Activated CD4-positive, alpha-beta memory T cell treated with anti-CD3 and anti-CD28 coated beads for 36 hours (primary cell): ENCODE measurements at regions of chr5 and their contacts with region 1.

Region 1: GRCh38 chr5:170225326-170226128 is 7.3 kb upstream of the C5orf58 start:
- DNase-seq: peak; percentile 81
- H3K4me3 Mint-ChIP-seq: no peak overlapping the region
- H3K27ac Mint-ChIP-seq: no peak overlapping the region
- H3K4me1 Mint-ChIP-seq: peaks cover 3% of the 10 kb centered on the region
- H3K27me3 Mint-ChIP-seq: no peaks in the 10 kb centered on the region

Region 2: DNA sequence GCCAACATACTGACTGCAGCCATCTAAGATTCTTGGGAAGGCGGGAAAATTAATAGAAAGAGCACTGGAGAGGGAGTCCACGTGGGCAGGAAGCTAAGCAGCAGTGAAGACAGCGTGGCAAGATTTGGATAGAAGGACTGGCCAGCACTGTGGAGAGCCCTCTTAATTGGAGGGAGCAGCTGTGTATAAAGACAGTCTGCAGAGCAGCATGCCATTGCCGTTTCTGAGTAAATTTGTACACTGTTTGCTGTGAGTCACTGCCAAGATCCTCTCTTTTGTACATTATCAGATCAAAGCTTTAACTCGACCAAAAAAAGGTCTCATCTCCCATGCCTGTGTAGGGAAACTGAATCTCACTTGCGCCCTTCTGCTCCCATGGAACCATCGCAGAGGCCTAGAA is 290.5 kb before region 1 on chr5:
- CTCF ChIA-PET with region 1: no interaction called
- POLR2A ChIA-PET with region 1: no interaction called
- intact Hi-C with region 1: no loop called
- DNase-seq: no peak
- H3K4me3 Mint-ChIP-seq: no peak overlapping the region
- H3K27ac Mint-ChIP-seq: no peak overlapping the region
- H3K4me1 Mint-ChIP-seq: peaks cover 42% of the 10 kb centered on the region
- H3K27me3 Mint-ChIP-seq: no peaks in the 10 kb centered on the region

Region 3: DNA sequence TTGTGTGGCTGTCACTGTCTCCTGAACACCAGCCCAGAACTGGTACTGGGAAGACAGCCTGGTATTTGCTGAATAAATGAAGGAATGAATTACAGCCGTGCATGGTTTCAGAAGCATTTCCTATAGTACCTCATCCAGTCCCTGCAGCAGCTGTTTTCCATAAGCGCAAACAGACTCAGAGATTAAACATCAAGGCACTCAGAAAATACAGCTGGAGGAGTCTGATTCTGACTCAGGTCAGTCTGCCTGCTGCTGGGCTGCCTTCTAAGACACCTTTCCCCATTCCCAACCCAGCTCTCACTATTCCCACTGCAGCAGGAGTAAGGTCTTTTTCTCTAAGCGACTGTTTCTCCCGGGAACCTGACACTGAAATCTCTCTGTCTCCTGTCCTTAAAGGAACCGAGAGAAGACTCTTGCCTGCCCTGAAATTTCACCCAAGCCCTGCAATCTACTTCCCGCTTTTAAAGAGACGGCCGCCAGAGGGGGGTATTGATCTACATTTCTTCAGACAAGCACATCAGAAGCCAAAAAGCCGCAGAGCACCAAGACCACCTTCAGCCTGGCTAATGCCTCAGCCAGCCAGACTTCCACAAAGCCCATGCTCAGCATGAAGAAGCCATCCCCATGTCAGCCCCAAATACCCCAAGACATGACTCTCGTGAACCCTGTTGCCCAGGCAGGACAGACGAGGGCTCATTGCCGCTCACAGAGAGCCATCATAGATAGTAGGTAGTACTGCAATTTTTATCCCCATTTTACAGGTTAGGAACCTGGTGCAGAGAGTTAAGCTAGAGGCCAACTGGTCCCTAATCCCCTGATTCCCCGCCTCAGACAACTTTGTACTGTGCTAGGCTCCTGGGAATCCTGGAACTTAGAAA is 125.2 kb before region 1 on chr5:
- CTCF ChIA-PET with region 1: interaction called, 3 read pairs
- POLR2A ChIA-PET with region 1: no interaction called
- intact Hi-C with region 1: loop called (anchors 5 kb)
- DNase-seq: peak; percentile 78
- H3K4me3 Mint-ChIP-seq: no peak overlapping the region
- H3K27ac Mint-ChIP-seq: no peak overlapping the region
- H3K4me1 Mint-ChIP-seq: no peaks in the 10 kb centered on the region
- H3K27me3 Mint-ChIP-seq: peaks cover 3% of the 10 kb centered on the region

Region 4: DNA sequence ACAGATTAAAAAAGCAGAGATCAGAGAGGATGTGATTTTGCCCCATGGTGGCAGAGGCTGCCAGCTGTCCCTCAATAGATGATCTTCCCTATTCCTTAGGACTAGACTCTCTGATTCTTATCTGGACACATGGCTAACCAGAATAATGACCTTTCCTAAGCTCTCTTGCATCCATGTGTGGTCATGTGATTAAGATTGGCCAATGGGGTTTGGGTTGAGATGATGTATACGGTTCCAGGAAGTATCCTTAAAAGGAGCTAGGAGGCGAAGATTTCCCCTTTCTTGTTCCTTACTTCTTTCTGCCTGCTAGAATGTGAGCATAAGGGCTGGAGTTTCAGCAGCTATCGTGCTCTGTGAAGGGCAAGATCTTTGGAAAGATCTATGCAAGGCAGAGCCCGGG is 80.1 kb before region 1 on chr5:
- CTCF ChIA-PET with region 1: no interaction called
- POLR2A ChIA-PET with region 1: no interaction called
- intact Hi-C with region 1: no loop called
- DNase-seq: no peak
- H3K4me3 Mint-ChIP-seq: no peak overlapping the region
- H3K27ac Mint-ChIP-seq: no peak overlapping the region
- H3K4me1 Mint-ChIP-seq: no peaks in the 10 kb centered on the region
- H3K27me3 Mint-ChIP-seq: peaks cover 3% of the 10 kb centered on the region

Region 5: GRCh38 chr5:170162626-170163321 is 62.8 kb before region 1 on chr5:
- CTCF ChIA-PET with region 1: no interaction called
- POLR2A ChIA-PET with region 1: no interaction called
- intact Hi-C with region 1: no loop called
- DNase-seq: no peak
- H3K4me3 Mint-ChIP-seq: no peak overlapping the region
- H3K27ac Mint-ChIP-seq: no peak overlapping the region
- H3K4me1 Mint-ChIP-seq: no peaks in the 10 kb centered on the region
- H3K27me3 Mint-ChIP-seq: no peaks in the 10 kb centered on the region

Region 6: GRCh38 chr5:170267431-170268152 is 42.1 kb after region 1 on chr5:
- CTCF ChIA-PET with region 1: interaction called, 11 read pairs
- POLR2A ChIA-PET with region 1: no interaction called
- intact Hi-C with region 1: no loop called
- DNase-seq: peak; percentile 87
- H3K4me3 Mint-ChIP-seq: peak overlapping the region; percentile 60
- H3K27ac Mint-ChIP-seq: peak overlapping the region; percentile 85
- H3K4me1 Mint-ChIP-seq: peaks cover 87% of the 10 kb centered on the region
- H3K27me3 Mint-ChIP-seq: no peaks in the 10 kb centered on the region

Region 7: GRCh38 chr5:170348137-170348633 is 122.7 kb after region 1 on chr5:
- CTCF ChIA-PET with region 1: interaction called, 221 read pairs
- POLR2A ChIA-PET with region 1: no interaction called
- intact Hi-C with region 1: no loop called
- DNase-seq: no peak
- H3K4me3 Mint-ChIP-seq: no peak overlapping the region
- H3K27ac Mint-ChIP-seq: no peak overlapping the region
- H3K4me1 Mint-ChIP-seq: no peaks in the 10 kb centered on the region
- H3K27me3 Mint-ChIP-seq: peaks cover 11% of the 10 kb centered on the region

Region 8: GRCh38 chr5:170420780-170421412 is 195.4 kb after region 1 on chr5:
- CTCF ChIA-PET with region 1: interaction called, 162 read pairs
- POLR2A ChIA-PET with region 1: no interaction called
- intact Hi-C with region 1: loop called (anchors 1 kb)
- DNase-seq: peak; percentile 52
- H3K4me3 Mint-ChIP-seq: no peak overlapping the region
- H3K27ac Mint-ChIP-seq: no peak overlapping the region
- H3K4me1 Mint-ChIP-seq: peaks cover 14% of the 10 kb centered on the region
- H3K27me3 Mint-ChIP-seq: no peaks in the 10 kb centered on the region